ENCODE measurements at regions of chr15 and their contacts with region 1.

Region 1: GRCh38 chr15:92881802-92882696 is 18.1 kb upstream of the CHD2 start:
- DNase-seq: peak; percentile 99
- H3K4me3 ChIP-seq: peak overlapping the region; percentile 52
- CTCF ChIP-seq: no peak

Region 2: GRCh38 chr15:92803847-92804609 is 78.0 kb before region 1 on chr15:
- CTCF ChIA-PET with region 1: interaction called, 36 read pairs
- POLR2A ChIA-PET with region 1: interaction called, 45 read pairs
- DNase-seq: peak; percentile 100
- H3K4me3 ChIP-seq: no peak overlapping the region
- CTCF ChIP-seq: no peak

Region 3: GRCh38 chr15:92820236-92821021 is 61.6 kb before region 1 on chr15:
- CTCF ChIA-PET with region 1: interaction called, 3 read pairs
- POLR2A ChIA-PET with region 1: interaction called, 20 read pairs
- DNase-seq: no peak
- H3K4me3 ChIP-seq: peak overlapping the region; percentile 44
- CTCF ChIP-seq: no peak

Region 4: GRCh38 chr15:92846741-92847140 is 35.3 kb before region 1 on chr15:
- CTCF ChIA-PET with region 1: no interaction called
- POLR2A ChIA-PET with region 1: interaction called, 10 read pairs
- DNase-seq: peak; percentile 41
- H3K4me3 ChIP-seq: no peak overlapping the region
- CTCF ChIP-seq: no peak

Region 5: DNA sequence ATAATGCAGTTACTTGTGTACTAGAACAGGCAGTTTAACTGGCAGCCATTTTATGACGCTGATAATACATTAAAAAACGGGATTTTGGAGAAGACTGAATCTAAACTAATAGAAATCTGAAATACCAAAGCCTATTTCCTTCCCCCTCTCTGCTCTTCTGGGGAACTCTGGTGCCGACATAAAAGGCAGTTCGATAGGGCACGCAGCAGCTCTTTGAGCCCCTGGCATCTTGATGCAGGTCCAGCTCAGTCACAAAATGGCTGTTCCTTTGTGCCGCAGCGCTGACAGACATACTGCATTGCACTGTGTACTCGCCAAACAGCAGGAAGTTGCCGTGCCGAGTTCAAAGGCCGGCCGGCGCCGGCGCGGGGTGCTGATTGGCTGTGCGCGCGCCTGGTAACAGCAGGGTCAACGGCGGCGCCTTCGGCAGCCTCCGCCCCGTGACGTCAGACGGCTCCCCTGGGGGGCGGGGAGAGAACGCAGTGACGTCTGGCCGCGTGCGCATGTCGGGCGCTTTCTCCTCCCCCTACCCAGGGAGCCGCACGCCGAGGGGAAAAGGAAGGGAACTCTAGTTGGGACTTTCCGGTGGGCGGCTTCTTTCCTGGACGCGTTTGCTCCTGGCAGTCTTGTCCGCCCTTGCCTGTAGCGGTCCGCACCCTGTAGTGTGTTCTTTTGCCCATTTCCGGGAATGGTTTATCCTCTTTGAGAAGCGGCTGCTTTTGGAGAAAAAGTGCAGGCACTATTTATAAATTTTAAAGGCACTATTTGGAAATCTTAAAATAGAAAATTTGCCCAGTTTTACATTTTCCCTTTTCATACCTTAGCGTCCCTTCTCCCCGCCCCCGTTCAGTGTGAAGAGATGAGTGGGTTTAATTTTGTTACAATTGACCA is 22.1 kb after region 1 on chr15:
- CTCF ChIA-PET with region 1: interaction called, 4 read pairs
- POLR2A ChIA-PET with region 1: interaction called, 50 read pairs
- DNase-seq: peak; percentile 88
- H3K4me3 ChIP-seq: peak overlapping the region; percentile 66
- CTCF ChIP-seq: no peak